ENCODE measurements at regions of chr4 and their contacts with region 1.

Region 1: DNA sequence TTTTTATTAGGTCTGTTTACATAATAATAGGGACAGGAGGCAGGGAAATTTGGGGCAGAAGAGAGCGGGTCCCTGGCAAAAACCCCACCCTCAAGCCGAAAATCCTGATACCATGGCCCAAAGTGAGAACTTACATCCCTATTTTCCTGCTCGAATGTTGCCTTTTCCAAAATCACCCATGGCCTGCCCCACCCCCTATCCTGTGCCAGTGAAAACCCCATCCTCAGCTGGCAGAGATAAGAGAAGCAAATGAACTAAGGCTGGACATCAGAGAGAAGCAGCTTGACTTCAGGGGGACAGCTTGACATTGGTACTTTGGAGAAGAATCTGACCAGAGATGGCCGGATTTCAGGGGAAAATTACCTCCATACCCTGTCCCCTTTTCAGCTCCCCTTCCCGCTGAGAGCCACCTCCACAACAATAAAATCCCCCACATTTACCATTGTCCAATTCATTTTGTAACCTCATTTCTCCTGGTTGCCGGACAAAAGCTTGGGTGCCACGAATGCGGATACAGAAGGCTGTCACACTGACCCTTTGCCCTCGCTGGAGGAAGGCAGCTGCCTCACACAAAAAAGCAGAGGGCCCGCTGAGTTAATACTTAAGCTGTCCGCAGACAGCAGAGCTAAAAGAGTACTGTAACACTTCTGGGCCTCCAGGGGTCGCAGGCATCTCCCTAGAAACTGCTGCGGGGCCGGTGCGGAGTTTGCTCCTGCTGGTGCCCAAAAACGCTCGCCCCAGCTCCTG is 196.2 kb downstream of the SNCA start:
- DNase-seq: peak; percentile 50
- ATAC-seq: peak; percentile 42

Region 2: DNA sequence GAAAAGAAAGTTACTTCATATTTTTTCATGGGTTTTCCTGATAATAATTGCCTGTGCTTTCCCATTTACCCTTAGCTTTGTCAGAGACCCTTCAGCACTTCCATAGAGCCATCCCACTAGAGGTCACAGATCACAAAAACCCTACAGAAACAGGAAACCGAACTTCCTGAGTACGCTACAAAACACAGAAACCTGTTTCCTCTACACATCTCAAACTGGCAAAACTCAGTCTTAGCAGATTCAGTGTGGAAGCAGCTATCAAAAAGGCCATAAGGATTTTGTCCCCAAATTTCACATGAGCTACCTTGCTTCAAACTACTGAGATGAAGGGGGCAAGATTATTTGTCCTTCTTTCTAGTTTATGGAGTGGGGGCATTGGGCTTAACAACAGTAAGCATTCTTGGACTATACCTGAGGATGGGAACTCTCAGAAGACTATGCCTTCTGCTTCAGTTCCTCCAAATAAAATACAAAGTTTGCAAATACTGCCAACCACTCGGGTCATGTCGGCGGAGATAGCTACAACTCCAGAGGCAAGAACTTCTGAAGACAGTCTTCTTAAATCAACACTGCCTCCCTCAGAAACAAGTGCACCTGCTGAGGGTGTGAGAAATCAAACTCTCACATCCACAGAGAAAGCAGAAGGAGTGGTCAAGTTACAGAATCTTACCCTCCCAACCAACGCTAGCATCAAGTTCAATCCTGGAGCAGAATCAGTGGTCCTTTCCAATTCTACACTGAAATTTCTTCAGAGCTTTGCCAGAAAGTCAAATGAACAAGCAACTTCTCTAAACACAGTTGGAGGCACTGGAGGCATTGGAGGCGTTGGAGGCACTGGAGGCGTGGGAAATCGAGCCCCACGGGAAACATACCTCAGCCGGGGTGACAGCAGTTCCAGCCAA is 254.1 kb after region 1 on chr4 and contains the start of gene MMRN1:
- intact Hi-C with region 1: loop called (anchors 2 kb)
- DNase-seq: no peak
- ATAC-seq: no peak
- total RNA-seq, gene MMRN1: 3.7 TPM

Measured in Right ventricle myocardium inferior (tissue), 1 donor.